ENCODE measurements at regions of chr17 and their contacts with region 1.

Region 1: GRCh38 chr17:72407336-72407909 is 286.6 kb downstream of the SOX9 start:
- DNase-seq: peak; percentile 85 to 86
- ATAC-seq: peak; percentile 66
- H3K4me3 ChIP-seq: no peak overlapping the region
- H3K27ac ChIP-seq: no peak overlapping the region
- H3K4me1 ChIP-seq: peaks cover 0 to 4% of the 10 kb centered on the region in 2 donors
- H3K27me3 ChIP-seq: no peaks in the 10 kb centered on the region

Region 2: GRCh38 chr17:71976011-71976649 is 431.3 kb before region 1 on chr17:
- intact Hi-C with region 1: loop called in 1 of 2 experiments (anchors 10 kb)
- DNase-seq: peak; percentile 94
- ATAC-seq: peak; percentile 97
- H3K4me3 ChIP-seq: no peak overlapping the region
- H3K27ac ChIP-seq: peak overlapping the region in 1 of 2 donors; percentile 41
- H3K4me1 ChIP-seq: no peaks in the 10 kb centered on the region
- H3K27me3 ChIP-seq: no peaks in the 10 kb centered on the region

Region 3: DNA sequence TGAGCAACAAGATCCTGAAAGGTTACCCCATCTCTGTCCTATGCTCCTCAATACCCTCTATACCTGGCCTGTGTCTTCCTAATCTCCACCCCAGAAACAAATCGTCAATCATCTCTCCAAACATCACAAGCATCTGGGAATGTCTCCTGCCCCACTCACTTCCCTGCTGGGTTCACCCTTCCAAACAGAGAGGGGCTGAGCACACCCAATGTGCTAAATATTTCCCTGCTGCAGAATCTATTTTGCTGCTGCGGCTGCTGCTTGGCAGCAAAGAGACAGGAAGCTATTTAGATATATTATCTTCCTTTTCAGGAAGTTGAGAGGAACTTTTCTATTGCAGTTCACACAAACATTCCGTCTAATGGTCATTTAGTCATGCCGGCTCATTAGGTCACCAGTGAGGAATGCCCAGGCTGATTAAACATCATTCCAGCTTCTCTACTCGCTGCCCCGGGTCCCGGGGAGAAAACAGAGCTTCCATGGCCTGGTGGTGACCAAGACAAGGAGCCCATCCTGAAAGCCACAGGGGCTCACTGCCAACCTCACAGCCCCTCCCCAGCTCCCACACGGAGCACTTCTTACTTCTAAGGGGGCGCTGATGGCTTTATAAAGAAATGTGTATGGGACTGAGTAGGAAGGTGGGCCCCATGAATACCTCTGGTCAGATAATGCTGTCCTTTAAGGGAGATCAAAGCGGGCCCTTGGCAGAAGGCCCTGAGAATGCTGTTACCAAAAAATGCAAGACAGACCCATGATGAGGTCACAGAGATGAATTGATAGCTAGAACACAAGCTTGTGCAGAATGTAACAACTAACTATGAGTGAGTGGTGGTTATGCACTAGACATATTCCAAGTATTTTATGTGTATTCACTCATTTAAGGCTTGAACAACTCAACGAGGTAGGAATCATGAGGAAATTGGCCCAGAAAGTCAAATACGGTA is 68.3 kb before region 1 on chr17:
- intact Hi-C with region 1: loop called in 1 of 2 experiments (anchors 5 kb)
- DNase-seq: peak; percentile 52 to 80
- ATAC-seq: peak; percentile 57
- H3K4me3 ChIP-seq: no peak overlapping the region
- H3K27ac ChIP-seq: no peak overlapping the region
- H3K4me1 ChIP-seq: peaks cover 3 to 5% of the 10 kb centered on the region in 2 donors
- H3K27me3 ChIP-seq: no peaks in the 10 kb centered on the region

Measured in aorta (tissue), 5 donors.